CD8-positive, alpha-beta T cell (primary cell): ENCODE measurements at regions of chr19 and their contacts with region 1.

Region 1: DNA sequence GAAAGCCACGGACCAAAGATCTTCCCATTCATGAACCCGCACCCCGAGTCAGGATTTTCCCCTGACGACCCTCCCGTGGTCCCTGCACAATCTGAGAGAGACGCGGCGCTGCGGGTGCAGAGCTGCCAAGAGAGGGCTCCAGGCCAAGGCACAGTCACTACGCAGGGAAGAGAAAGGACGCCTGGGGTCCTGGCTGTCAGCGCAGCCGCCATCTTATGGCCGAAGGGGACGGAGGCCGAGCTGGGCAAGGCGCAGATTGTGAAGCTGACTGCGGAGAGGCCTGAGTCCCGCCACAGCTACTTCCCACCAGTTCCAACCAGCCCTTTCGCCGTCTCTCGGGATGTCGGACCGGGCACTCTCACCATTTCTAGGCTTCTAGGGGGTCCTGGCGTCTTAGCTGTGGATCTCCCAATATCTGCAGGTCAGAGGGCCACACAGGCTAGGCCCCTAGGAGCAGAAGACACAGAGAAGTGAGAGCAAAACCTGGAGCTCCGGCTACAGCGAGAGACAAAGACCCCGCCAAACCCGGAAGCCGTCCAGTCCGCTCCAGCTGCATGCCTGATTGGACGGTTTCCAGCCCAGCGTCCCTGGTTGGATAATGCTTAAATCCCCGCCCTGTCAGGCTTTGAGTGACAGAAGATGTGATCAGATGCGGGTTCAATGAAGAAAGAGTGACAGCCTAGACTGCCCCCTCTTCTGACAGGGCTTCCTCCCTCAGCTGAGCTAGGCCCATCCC is at the start of gene ZNF100:
- DNase-seq: peak; percentile 72 to 93 (median 87)
- ATAC-seq: peak; percentile 98
- H3K4me3 ChIP-seq: peak within 1 kb of the TSS; percentile 86 to 98
- H3K4me3 Mint-ChIP-seq: peak within 1 kb of the TSS; percentile 97
- H3K27ac ChIP-seq: peak within 1 kb of the TSS; percentile 71 to 87
- H3K27ac Mint-ChIP-seq: peak within 1 kb of the TSS; percentile 86
- H3K4me1 ChIP-seq: peaks cover 3% of the 10 kb centered on the region
- H3K4me1 Mint-ChIP-seq: peaks cover 21% of the 10 kb centered on the region
- H3K27me3 ChIP-seq: no peaks in the 10 kb centered on the region
- H3K27me3 Mint-ChIP-seq: no peaks in the 10 kb centered on the region
- CTCF ChIP-seq: no peak
- total RNA-seq, gene ZNF100: 5.9 to 6.7 TPM

Region 2: DNA sequence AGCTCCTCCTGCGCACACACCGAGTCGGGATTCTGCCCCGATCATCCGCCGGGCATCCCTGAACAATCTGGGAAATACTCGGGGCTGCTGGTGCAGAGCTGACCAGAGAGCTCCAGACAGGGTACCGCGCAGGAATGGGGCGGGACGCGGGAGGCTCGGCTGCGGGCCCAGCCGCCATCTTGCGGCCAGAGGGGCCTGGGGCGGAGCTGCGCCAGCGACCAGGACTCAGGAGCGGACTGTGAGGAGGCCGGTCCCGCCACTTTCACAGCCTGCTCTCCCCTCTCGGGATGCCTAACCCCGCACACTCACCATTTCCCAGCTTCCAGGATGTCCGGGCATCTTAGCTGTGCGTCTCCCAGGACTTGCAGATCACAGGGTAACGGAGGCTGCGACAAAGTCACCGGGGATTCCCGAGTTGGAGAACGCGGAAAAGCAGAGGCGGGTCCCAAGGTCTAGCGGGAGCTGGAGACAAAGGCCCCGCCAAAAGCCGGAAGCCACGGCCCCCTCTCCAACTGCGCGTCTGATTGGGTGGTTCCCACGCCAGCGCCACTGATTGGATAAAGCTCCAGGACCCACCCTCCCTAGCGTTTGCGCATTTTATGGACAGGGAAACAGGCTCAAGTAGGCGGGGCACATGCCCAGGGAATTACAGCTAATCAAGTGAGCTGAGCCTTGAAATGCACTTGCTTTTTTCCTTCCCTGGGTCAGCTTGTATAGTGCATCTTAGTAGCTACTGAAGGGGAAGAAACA is 84.5 kb after region 1 on chr19:
- CTCF ChIA-PET with region 1: no interaction called
- POLR2A ChIA-PET with region 1: interaction called, 7 read pairs
- intact Hi-C with region 1: loop called (anchors 1 to 2 kb)
- DNase-seq: peak; percentile 72 to 94 (median 90)
- ATAC-seq: peak; percentile 99
- H3K4me3 ChIP-seq: peak overlapping the region; percentile 95
- H3K4me3 Mint-ChIP-seq: peak overlapping the region; percentile 93
- H3K27ac ChIP-seq: peak overlapping the region; percentile 68 to 80
- H3K27ac Mint-ChIP-seq: peak overlapping the region; percentile 91
- H3K4me1 ChIP-seq: peaks cover 11% of the 10 kb centered on the region
- H3K4me1 Mint-ChIP-seq: peaks cover 26% of the 10 kb centered on the region
- H3K27me3 ChIP-seq: no peaks in the 10 kb centered on the region
- H3K27me3 Mint-ChIP-seq: peaks cover 2% of the 10 kb centered on the region
- CTCF ChIP-seq: no peak

Region 3: GRCh38 chr19:22332924-22333323 is 565.7 kb after region 1 on chr19:
- CTCF ChIA-PET with region 1: no interaction called
- POLR2A ChIA-PET with region 1: no interaction called
- intact Hi-C with region 1: no loop called
- DNase-seq: no peak
- ATAC-seq: no peak
- H3K4me3 ChIP-seq: no peak overlapping the region
- H3K4me3 Mint-ChIP-seq: no peak overlapping the region
- H3K27ac ChIP-seq: no peak overlapping the region
- H3K27ac Mint-ChIP-seq: no peak overlapping the region
- H3K4me1 ChIP-seq: no peaks in the 10 kb centered on the region
- H3K4me1 Mint-ChIP-seq: no peaks in the 10 kb centered on the region
- H3K27me3 ChIP-seq: no peaks in the 10 kb centered on the region
- H3K27me3 Mint-ChIP-seq: no peaks in the 10 kb centered on the region
- CTCF ChIP-seq: no peak